Activated T-helper 1 cell treated with anti-CD3 and anti-CD28 coated beads, Interleukin-12 subunit alpha, Interleukin-12 subunit beta, Interleukin-2, Interleukin-4 antibody, amounts not matched to agents 30 ng/mL and 10 ng/mL and 1 ng/mL, durations not matched to agents 14 hours and 24 hours and 36 hours (primary cell): ENCODE measurements at regions of chr10 and their contacts with region 1.

Region 1: GRCh38 chr10:100267237-100268104 is at the start of gene CWF19L1:
- DNase-seq: peak; percentile 72
- H3K4me3 Mint-ChIP-seq: peak within 1 kb of the TSS; percentile 99
- H3K27ac Mint-ChIP-seq: peak within 1 kb of the TSS; percentile 95
- H3K4me1 Mint-ChIP-seq: peaks cover 20% of the 10 kb centered on the region
- H3K27me3 Mint-ChIP-seq: no peaks in the 10 kb centered on the region
- total RNA-seq, gene CWF19L1: 37.3 and 42.6 TPM in 2 replicates

Region 2: GRCh38 chr10:100229819-100230422 is 37.5 kb before region 1 on chr10:
- intact Hi-C with region 1: loop called (anchors 1 kb)
- DNase-seq: no peak
- H3K4me3 Mint-ChIP-seq: peak overlapping the region; percentile 97
- H3K27ac Mint-ChIP-seq: peak overlapping the region; percentile 82
- H3K4me1 Mint-ChIP-seq: peaks cover 34% of the 10 kb centered on the region
- H3K27me3 Mint-ChIP-seq: no peaks in the 10 kb centered on the region

Region 3: DNA sequence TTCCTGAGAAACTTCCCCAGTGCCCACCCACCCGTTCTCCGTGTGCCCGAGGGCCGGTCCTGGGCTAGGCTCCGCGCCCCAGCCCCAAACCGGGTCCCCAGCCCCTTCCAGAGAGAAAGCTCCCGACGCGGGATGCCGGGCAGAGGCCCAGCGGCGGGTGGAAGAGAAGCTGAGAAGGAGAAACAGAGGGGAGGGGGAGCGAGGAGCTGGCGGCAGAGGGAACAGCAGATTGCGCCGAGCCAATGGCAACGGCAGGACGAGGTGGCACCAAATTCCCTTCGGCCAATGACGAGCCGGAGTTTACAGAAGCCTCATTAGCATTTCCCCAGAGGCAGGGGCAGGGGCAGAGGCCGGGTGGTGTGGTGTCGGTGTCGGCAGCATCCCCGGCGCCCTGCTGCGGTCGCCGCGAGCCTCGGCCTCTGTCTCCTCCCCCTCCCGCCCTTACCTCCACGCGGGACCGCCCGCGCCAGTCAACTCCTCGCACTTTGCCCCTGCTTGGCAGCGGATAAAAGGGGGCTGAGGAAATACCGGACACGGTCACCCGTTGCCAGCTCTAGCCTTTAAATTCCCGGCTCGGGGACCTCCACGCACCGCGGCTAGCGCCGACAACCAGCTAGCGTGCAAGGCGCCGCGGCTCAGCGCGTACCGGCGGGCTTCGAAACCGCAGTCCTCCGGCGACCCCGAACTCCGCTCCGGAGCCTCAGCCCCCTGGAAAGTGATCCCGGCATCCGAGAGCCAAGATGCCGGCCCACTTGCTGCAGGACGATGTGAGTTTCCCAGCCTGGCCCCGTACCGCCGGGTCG is 79.5 kb after region 1 on chr10 and contains the start of gene SCD:
- intact Hi-C with region 1: loop called (anchors 1 kb)
- DNase-seq: peak; percentile 88
- H3K4me3 Mint-ChIP-seq: peak within 1 kb of the TSS; percentile 100
- H3K27ac Mint-ChIP-seq: peak within 1 kb of the TSS; percentile 99
- H3K4me1 Mint-ChIP-seq: peaks cover 72% of the 10 kb centered on the region
- H3K27me3 Mint-ChIP-seq: no peaks in the 10 kb centered on the region
- total RNA-seq, gene SCD: 194 TPM in 2 replicates